ENCODE measurements at regions of chr18 and their contacts with region 1.

Region 1: GRCh38 chr18:77935342-77935741 is 685.7 kb downstream of the GALR1 start:
- DNase-seq: no peak
- ATAC-seq: no peak

Region 2: DNA sequence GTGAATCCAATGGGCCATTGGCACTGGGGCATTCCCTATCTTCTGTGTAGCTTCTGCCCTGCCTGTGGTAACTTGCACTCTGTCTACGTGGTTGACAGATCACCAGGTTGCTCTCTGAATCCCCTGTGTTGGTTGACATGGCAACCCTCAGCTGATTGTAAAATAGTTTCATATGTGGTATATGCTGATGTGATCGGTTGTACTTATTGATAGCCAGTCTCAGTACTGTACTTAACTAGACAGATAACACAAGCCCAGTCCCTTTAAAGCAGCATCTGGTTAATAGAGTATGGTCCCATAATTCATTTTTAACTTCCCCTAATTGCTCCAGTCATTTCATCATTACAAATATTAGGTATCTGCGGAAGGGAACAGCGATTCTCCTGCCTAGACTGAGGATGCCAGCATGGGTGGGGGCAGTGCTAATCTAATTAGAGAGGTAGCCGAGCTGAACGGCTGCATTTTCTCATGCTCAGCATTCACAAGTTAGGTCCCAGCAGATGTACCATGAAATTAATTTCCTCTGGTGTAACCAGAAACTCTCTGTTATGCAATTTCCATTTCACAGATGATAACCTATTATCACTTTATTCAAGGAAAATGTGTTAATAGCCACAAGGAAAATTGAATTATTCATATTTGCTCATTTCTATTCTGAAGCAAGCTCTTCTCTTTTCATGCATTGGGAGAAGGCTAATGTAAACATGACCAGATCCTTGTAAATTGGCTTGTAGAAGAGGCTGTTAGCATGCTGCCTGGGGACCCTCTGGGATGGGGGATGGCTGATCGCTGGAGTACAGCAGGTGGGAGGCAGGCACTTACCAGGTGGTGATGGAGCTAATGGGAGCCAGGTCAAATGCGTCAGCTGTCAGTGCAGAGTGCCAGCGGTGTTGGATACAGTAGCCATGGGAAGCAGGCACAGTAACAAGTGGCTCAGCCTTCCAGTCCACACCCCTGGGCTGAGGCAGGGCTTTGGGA is 77.4 kb before region 1 on chr18:
- intact Hi-C with region 1: no loop called
- DNase-seq: no peak
- ATAC-seq: no peak

Region 3: GRCh38 chr18:78001811-78002210 is 66.5 kb after region 1 on chr18:
- intact Hi-C with region 1: loop called (anchors 2 kb)
- DNase-seq: no peak
- ATAC-seq: no peak

Measured in sciatic nerve (tissue), 2 donors.